ENCODE measurements at regions of chr4 and their contacts with region 1.

Region 1: DNA sequence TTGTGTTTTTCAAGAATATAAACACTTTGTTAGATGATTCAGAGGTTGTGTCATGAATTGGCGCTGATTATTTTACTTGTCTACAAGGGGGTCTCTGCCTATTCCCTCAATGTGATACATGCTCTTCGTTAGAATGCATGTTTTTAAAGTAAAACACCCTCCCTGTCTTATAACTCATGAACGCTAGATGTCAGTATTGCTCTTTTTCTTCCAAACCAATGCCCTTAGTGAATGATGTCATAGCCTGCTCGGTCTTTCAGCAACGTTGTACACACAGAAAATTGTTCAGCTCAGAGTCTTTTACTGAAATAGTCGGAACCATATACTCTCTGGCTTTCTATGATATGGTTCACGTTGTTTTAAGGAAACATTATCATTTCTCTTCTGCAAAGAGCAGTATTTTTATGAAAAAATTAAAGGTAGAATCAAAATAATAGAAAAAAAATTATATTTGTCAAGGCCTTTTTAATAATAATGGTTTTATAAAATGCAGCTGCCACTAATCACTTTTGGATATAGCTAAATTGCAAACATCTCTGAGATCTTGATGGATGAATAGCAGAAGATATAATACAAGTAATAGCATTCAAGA is 292.9 kb downstream of the TLL1 start:
- DNase-seq: peak; percentile 10
- ATAC-seq: peak; percentile 75
- H3K4me3 Mint-ChIP-seq: no peak overlapping the region
- H3K27ac Mint-ChIP-seq: no peak overlapping the region
- H3K4me1 Mint-ChIP-seq: no peaks in the 10 kb centered on the region
- H3K27me3 Mint-ChIP-seq: no peaks in the 10 kb centered on the region

Region 2: GRCh38 chr4:166012129-166013078 is 153.5 kb before region 1 on chr4:
- CTCF ChIA-PET with region 1: no interaction called
- POLR2A ChIA-PET with region 1: no interaction called
- intact Hi-C with region 1: no loop called
- DNase-seq: no peak
- ATAC-seq: peak; percentile 42
- H3K4me3 Mint-ChIP-seq: no peak overlapping the region
- H3K27ac Mint-ChIP-seq: no peak overlapping the region
- H3K4me1 Mint-ChIP-seq: peaks cover 2% of the 10 kb centered on the region
- H3K27me3 Mint-ChIP-seq: no peaks in the 10 kb centered on the region

Region 3: DNA sequence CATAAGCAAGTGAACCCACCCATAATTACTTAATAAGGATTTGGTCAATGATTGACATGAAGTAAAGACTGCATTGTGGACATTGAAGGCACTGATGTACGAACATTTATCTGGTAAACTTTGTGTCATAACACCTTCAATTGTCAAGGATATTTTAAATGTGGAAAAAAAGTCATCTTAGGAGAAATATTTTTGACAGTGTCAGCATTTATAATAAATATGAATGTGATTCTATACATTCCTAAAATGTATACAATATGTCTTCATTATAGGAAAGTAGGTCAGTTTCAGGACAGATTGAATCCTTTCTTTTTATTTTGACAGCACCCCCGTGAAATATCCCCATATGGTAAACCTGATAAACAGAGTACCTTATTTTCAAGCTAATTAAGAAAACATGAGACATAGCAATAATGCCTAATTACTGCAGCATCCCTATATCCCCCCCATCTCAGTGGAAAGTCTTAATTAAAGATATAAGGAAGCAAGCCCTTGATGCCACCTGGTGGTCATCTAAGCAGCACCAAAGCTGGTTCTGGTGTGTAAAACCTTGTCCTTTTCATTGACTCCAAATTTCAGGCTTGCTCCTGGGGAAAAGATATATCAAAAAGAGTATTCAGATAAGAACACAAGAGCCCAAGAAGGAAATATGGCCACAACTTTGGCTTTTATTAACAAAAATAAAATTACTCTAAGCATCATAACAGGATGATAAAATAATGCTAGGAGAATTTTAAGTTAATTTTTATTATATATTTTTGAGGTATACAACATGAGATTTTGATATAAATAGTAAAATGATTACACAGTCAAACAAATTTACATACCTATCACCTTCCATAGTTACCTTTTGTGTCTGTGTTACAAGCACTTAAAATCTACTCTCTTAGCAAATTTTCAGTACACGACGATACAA is 86.8 kb after region 1 on chr4:
- CTCF ChIA-PET with region 1: no interaction called
- POLR2A ChIA-PET with region 1: no interaction called
- intact Hi-C with region 1: loop called (anchors 1 to 5 kb)
- DNase-seq: no peak
- ATAC-seq: no peak
- H3K4me3 Mint-ChIP-seq: no peak overlapping the region
- H3K27ac Mint-ChIP-seq: no peak overlapping the region
- H3K4me1 Mint-ChIP-seq: no peaks in the 10 kb centered on the region
- H3K27me3 Mint-ChIP-seq: no peaks in the 10 kb centered on the region

Region 4: GRCh38 chr4:166594326-166594946 is 428.5 kb after region 1 on chr4:
- CTCF ChIA-PET with region 1: interaction called, 4 read pairs
- POLR2A ChIA-PET with region 1: no interaction called
- intact Hi-C with region 1: loop called in 1 of 2 experiments (anchors 2 kb)
- DNase-seq: peak; percentile 7
- ATAC-seq: no peak
- H3K4me3 Mint-ChIP-seq: no peak overlapping the region
- H3K27ac Mint-ChIP-seq: no peak overlapping the region
- H3K4me1 Mint-ChIP-seq: no peaks in the 10 kb centered on the region
- H3K27me3 Mint-ChIP-seq: no peaks in the 10 kb centered on the region

Region 5: DNA sequence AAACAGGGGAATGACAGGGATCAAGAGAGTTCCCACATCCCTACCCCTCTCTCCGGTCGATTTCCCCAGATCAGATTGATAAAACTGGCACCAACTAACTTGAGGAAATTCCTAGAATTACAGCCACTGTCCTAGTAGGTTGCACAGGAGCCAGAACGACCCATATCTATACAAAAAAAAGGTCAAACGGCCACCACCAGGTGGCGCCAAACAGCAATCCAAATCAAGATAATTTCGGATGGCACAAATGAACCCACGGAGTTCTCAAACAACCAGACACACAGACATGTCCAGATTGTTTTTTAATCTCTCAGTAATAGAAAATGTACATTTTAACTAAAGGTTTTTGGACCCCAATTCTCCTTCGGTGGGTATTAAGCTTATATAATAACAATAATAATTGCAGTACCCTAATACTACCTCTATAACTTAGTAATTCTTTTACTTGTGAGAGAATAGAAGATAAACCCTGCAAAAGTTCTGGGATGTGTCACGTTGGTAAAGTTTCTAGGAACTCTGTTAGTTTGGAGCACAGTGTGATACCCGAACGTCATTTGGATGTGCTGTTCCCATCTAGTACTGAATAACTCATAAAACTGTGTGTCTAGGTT is 855.7 kb after region 1 on chr4:
- CTCF ChIA-PET with region 1: no interaction called
- POLR2A ChIA-PET with region 1: no interaction called
- intact Hi-C with region 1: loop called (anchors 1 to 10 kb)
- DNase-seq: peak; percentile 76
- ATAC-seq: peak; percentile 30
- H3K4me3 Mint-ChIP-seq: no peak overlapping the region
- H3K27ac Mint-ChIP-seq: no peak overlapping the region
- H3K4me1 Mint-ChIP-seq: no peaks in the 10 kb centered on the region
- H3K27me3 Mint-ChIP-seq: no peaks in the 10 kb centered on the region

Region 6: DNA sequence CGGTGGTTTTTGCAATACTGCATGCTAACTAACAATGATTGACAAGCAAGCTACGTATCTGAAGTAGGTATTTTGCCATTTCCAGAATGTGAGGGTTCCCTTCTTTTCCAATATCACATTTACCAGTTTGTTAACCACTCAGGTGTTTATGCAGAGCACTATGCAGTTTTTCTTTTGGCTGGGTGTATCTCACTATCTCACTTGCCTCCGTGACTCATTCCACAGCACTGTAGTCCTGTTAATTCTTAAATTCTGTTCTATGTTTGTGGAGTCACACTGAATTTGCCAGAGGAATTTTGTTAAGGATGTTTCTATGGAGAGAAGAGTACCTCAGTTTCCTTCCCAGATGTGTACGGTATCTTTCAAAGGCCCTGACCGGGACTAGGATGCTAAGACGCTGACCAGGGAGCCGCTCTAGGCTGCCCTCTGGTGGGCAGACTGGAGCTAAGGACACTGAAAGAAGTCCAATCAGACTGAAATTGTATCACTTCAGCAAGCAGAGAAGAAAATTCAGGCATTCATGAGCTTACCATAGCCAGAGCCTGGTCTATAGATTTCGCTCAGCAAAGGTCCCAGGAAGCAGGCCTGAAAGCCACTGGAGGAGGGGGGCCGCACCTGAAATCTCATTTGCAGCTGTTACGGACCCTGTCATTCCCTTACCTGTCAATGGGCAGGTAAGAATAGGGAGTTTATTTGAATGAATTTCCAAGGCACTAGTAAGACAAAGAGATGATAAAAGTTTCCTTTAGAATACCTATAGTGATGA is 1456.7 kb after region 1 on chr4:
- CTCF ChIA-PET with region 1: interaction called, 3 read pairs
- POLR2A ChIA-PET with region 1: no interaction called
- intact Hi-C with region 1: loop called (anchors 2 to 5 kb)
- DNase-seq: peak; percentile 63
- ATAC-seq: peak; percentile 68
- H3K4me3 Mint-ChIP-seq: no peak overlapping the region
- H3K27ac Mint-ChIP-seq: no peak overlapping the region
- H3K4me1 Mint-ChIP-seq: no peaks in the 10 kb centered on the region
- H3K27me3 Mint-ChIP-seq: no peaks in the 10 kb centered on the region

Region 7: DNA sequence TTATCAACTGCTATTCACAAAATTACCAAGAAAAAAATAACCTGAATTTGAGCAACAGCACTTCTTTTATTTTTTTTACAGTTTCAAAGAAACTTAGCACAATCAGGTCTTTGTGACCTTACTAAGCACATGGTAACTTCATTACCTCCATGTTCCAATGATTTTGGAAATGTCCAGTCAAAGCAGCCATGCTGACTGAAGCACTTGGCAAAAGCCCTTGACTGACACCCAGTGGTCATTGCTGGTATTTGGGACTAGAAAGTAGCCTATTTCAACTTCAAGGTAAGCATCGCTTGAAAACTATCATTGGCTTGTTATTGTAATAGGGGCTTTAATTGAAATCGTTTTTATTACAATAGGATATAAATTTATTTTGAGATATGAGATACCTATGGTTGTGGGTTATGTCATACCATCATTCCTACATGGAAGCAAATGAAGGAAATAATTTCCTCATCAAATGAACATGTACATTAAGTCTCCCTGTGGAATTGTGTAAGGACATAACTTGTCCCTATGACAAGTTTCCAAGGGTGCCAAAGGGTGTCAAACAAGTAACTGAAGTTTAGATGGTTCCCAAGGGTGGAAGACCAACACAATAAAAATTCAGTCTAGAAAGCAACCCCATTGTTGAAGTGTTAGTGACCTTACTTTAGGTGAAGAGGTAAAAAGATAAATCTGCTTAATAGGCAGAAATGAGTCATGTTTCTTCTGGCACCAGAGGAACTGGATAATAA is 1911.2 kb after region 1 on chr4:
- CTCF ChIA-PET with region 1: no interaction called
- POLR2A ChIA-PET with region 1: no interaction called
- intact Hi-C with region 1: loop called in 1 of 2 experiments (anchors 1 kb)
- DNase-seq: peak; percentile 71
- ATAC-seq: peak; percentile 61
- H3K4me3 Mint-ChIP-seq: no peak overlapping the region
- H3K27ac Mint-ChIP-seq: no peak overlapping the region
- H3K4me1 Mint-ChIP-seq: no peaks in the 10 kb centered on the region
- H3K27me3 Mint-ChIP-seq: peaks cover 4% of the 10 kb centered on the region

Region 8: GRCh38 chr4:168153596-168154440 is 1987.9 kb after region 1 on chr4:
- CTCF ChIA-PET with region 1: no interaction called
- POLR2A ChIA-PET with region 1: no interaction called
- intact Hi-C with region 1: loop called in 1 of 2 experiments (anchors 1 kb)
- DNase-seq: peak; percentile 69
- ATAC-seq: peak; percentile 75
- H3K4me3 Mint-ChIP-seq: no peak overlapping the region
- H3K27ac Mint-ChIP-seq: no peak overlapping the region
- H3K4me1 Mint-ChIP-seq: peaks cover 5% of the 10 kb centered on the region
- H3K27me3 Mint-ChIP-seq: no peaks in the 10 kb centered on the region